ENCODE measurements at regions of chr1 and their contacts with region 1.

Region 1: DNA sequence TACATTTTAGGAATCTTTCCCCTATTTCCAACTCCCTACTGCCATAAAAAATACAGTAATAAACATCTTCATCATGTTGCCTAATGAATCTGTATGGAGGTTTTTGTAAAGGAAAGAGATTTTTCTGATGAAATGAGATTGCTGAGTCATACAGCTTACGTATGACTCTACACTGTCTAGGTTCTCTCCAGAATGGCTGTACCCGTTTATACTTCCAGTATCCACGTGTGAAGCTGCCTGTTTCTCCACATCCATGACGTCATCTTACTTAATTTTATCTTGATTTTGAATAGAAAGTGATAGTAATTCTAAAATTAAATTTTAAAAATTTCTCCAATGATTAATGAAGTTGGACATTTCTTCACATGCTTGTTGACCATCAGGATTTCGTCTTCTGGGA is 103.7 kb downstream of the COQ8A start:
- DNase-seq: no peak
- ATAC-seq: peak; percentile 60
- H3K4me3 Mint-ChIP-seq: no peak overlapping the region
- H3K27ac Mint-ChIP-seq: no peak overlapping the region
- H3K4me1 Mint-ChIP-seq: no peaks in the 10 kb centered on the region
- H3K27me3 Mint-ChIP-seq: peaks cover 9% of the 10 kb centered on the region

Region 2: GRCh38 chr1:226778657-226779058 is 265.1 kb before region 1 on chr1:
- CTCF ChIA-PET with region 1: no interaction called
- POLR2A ChIA-PET with region 1: no interaction called
- intact Hi-C with region 1: loop called in 1 of 2 experiments (anchors 10 kb)
- DNase-seq: no peak
- ATAC-seq: no peak
- H3K4me3 Mint-ChIP-seq: no peak overlapping the region
- H3K27ac Mint-ChIP-seq: no peak overlapping the region
- H3K4me1 Mint-ChIP-seq: peaks cover 2% of the 10 kb centered on the region
- H3K27me3 Mint-ChIP-seq: no peaks in the 10 kb centered on the region